ENCODE measurements at regions of chr17 and their contacts with region 1.

Region 1: DNA sequence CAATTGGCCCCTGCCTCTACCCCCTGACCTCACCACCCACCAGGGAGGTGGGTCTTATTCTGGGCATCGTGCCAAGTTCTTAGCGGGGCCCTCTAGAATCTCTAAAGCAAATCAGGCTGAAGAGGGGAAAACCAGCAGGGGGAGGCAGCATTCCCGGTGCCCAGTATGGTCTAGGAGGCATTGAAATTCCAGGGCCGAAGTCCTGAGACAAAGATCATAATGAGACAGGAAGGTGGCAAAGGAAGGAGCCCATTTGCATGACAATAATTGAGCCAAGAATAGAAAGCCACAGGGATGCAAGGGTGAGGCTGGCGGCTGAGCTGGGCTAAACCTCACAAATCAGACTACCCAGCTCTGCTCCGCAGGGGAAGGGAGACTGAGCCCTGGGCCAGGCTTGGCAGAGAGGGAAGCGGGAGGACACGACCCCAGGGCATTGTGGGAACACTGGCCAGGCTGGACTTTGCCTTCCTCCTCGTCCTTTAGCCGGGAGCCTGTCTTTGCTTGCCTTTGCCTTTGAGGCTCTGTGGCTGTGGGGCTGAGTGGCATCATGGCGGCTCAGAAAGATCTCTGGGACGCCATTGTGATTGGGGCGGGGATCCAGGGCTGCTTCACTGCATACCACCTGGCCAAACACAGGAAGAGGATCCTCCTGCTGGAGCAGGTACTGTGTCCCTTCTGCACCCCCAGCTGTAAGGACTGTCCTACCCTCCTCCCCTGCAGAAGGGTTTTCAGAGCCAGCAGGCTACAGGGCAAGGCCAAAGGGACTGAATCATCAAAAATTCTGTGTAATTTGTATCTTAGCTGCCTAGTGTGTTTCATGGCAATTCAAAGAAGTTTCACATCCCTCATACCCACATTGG is at the start of gene PIPOX:
- DNase-seq: peak in 2 of 6 donors; percentile 8 to 31
- ATAC-seq: peak; percentile 24 to 73 (median 60)
- H3K4me3 ChIP-seq: no peak within 1 kb of the TSS
- H3K27ac ChIP-seq: peak within 1 kb of the TSS in 2 of 4 donors; percentile 2 to 41
- H3K4me1 ChIP-seq: peaks cover 0 to 6% (median 5%) of the 10 kb centered on the region in 3 donors
- H3K27me3 ChIP-seq: no peaks in the 10 kb centered on the region
- CTCF ChIP-seq: no peak
- total RNA-seq, gene PIPOX: 0.55 to 1.1 (median 0.76) TPM

Region 2: DNA sequence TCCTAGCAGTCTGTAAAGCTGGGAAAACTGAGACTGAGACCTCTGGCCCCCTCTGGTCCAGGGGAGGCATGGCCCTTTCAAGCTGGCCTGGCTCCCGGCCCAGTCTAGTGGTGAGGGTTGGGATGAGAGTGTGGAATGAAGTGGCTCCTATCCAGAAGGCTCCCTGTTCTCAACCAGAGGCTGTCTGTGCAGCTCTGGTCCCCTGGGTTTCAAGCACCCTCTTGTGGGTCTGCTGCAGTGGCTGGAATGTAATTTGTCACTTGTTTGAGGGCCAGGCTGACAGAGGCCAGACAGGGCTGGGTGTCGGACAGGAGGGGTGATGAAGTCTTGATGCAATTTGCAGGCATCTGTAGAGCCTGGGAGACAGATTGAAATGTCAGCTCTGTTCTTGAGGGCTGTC is 69.5 kb before region 1 on chr17:
- intact Hi-C with region 1: loop called in 1 of 3 experiments (anchors 10 kb)
- DNase-seq: peak in 1 of 6 donors; percentile 59
- ATAC-seq: peak in 2 of 4 donors; percentile 28 to 48
- H3K4me3 ChIP-seq: no peak overlapping the region
- H3K27ac ChIP-seq: no peak overlapping the region
- H3K4me1 ChIP-seq: peaks cover 0 to 9% (median 8%) of the 10 kb centered on the region in 3 donors
- H3K27me3 ChIP-seq: no peaks in the 10 kb centered on the region
- CTCF ChIP-seq: no peak

Measured in pancreas (tissue), 10 donors.